Endothelial cell of umbilical vein (primary cell): ENCODE measurements at regions of chr15 and their contacts with region 1.

Region 1: GRCh38 chr15:84681831-84682230 is 23.8 kb upstream of the NMB start:
- DNase-seq: peak; percentile 18
- H3K4me3 ChIP-seq: no peak overlapping the region
- H3K27ac ChIP-seq: no peak overlapping the region
- H3K4me1 ChIP-seq: peaks cover 6% of the 10 kb centered on the region
- H3K27me3 ChIP-seq: no peaks in the 10 kb centered on the region
- CTCF ChIP-seq: no peak
- POLR2A ChIP-seq: no peak

Region 2: GRCh38 chr15:84697236-84697990 is 15.6 kb after region 1 on chr15:
- CTCF ChIA-PET with region 1: interaction called, 7 read pairs
- POLR2A ChIA-PET with region 1: no interaction called
- dilution Hi-C with region 1: no loop called
- intact Hi-C with region 1: loop called (anchors 2 kb)
- DNase-seq: no peak
- H3K4me3 ChIP-seq: no peak overlapping the region
- H3K27ac ChIP-seq: no peak overlapping the region
- H3K4me1 ChIP-seq: no peaks in the 10 kb centered on the region
- H3K27me3 ChIP-seq: no peaks in the 10 kb centered on the region
- CTCF ChIP-seq: no peak
- POLR2A ChIP-seq: no peak